Right cardiac atrium (tissue), 5 donors: ENCODE measurements at regions of chr13 and their contacts with region 1.

Region 1: GRCh38 chr13:99176309-99177276 is 24.1 kb upstream of the UBAC2 start:
- DNase-seq: peak; percentile 54 to 84 (median 82)
- ATAC-seq: peak; percentile 90 to 91
- H3K4me3 ChIP-seq: no peak overlapping the region
- H3K27ac ChIP-seq: no peak overlapping the region
- H3K4me1 ChIP-seq: no peaks in the 10 kb centered on the region
- H3K27me3 ChIP-seq: no peaks in the 10 kb centered on the region

Region 2: DNA sequence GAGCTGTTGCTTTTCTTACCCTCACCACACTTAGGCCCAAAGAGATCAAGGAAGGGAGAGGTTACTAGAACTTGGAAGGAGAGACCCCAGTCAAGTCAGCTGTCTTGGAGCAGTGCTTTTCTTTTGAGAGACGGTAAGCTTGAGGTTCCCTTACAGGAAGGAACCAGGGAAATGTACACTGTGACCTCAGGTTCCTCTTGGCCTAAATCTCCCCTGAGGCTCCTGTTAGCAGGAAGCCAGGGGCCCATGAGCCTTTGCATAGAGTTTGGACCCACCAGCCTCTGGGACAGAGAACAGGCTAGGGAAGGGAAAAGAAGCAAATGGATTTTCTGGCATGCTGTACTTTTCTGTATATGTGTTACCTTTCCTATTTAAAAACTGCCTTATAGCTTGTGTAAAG is 87.5 kb after region 1 on chr13:
- intact Hi-C with region 1: loop called (anchors 2 to 5 kb)
- DNase-seq: no peak
- ATAC-seq: peak in 1 of 2 donors; percentile 26
- H3K4me3 ChIP-seq: no peak overlapping the region
- H3K27ac ChIP-seq: no peak overlapping the region
- H3K4me1 ChIP-seq: peaks cover 2% of the 10 kb centered on the region
- H3K27me3 ChIP-seq: no peaks in the 10 kb centered on the region

Region 3: DNA sequence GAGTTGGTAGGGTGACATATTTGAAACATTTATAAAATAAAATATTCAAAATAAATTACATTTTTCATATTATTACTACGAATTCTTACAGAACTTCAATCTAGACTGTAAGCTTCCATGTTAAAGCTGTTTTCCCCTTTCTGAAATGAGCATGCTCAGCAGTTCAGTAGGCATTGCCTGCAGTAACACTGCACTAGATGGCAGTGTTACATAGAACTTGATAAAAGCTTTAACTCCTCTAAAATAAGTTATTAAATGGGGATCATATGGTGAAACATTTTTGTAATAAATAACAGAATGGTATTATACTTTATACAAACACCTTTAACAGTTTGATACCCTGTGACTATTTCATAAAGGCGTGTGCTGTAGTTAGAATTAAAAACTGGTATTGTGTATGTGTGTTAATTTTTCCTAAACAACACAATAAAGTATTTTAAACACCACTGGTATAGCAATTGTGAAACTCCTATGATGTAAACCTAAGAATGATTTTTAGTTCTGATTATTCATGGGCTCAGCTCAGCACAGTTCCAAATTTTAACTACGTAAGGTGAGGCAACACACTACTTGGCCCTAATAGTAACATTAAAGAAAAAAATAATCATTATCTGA is 93.1 kb after region 1 on chr13:
- intact Hi-C with region 1: loop called (anchors 2 to 5 kb)
- DNase-seq: no peak
- ATAC-seq: peak; percentile 62 to 71
- H3K4me3 ChIP-seq: no peak overlapping the region
- H3K27ac ChIP-seq: no peak overlapping the region
- H3K4me1 ChIP-seq: no peaks in the 10 kb centered on the region
- H3K27me3 ChIP-seq: no peaks in the 10 kb centered on the region

Region 4: GRCh38 chr13:99436686-99437416 is 260.3 kb after region 1 on chr13:
- intact Hi-C with region 1: loop called (anchors 2 to 5 kb)
- DNase-seq: peak; percentile 85 to 93 (median 92)
- ATAC-seq: peak; percentile 55 to 64
- H3K4me3 ChIP-seq: no peak overlapping the region
- H3K27ac ChIP-seq: no peak overlapping the region
- H3K4me1 ChIP-seq: no peaks in the 10 kb centered on the region
- H3K27me3 ChIP-seq: no peaks in the 10 kb centered on the region

Region 5: GRCh38 chr13:100315522-100315921 is 1138.9 kb after region 1 on chr13:
- intact Hi-C with region 1: no loop called
- DNase-seq: no peak
- ATAC-seq: no peak
- H3K4me3 ChIP-seq: no peak overlapping the region
- H3K27ac ChIP-seq: no peak overlapping the region
- H3K4me1 ChIP-seq: no peaks in the 10 kb centered on the region
- H3K27me3 ChIP-seq: no peaks in the 10 kb centered on the region